Activated T-helper 2 cell treated with anti-CD3 and anti-CD28 coated beads, Interferon-gamma antibody, Interleukin-2, Interleukin-4, amounts not matched to agents 10 μg/mL and 5 μg/mL and 100 μg/mL, durations not matched to agents 14 hours and 24 hours and 36 hours (primary cell): ENCODE measurements at regions of chr10 and their contacts with region 1.

Region 1: DNA sequence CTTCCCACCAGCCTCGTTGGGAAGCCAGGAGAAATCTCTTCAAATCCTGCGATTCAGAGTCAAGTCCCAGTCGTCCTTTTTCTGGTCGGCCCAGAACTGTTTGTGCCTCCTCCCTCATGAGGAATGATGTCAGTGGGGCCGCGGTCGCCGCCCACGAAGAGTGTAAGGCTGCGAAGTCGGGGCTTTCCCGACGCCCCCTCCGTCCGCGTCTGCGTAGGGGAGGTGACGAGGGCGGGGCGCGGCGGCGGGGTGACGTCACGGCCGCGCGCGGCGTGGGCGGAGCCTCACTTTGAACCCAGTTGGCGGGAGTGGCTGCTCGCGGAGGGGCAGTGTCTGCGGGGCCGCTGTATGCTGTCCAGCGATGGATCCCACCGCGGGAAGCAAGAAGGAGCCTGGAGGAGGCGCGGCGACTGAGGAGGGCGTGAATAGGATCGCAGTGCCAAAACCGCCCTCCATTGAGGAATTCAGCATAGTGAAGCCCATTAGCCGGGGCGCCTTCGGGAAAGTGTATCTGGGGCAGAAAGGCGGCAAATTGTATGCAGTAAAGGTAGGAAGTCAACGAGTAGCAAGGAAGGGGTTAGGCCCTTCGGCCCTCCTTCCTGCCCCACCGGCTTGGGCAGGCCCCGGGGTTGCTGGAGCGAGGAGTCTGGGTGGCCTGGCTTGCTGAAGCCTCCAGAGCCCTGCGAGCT is at the start of gene MASTL:
- DNase-seq: peak; percentile 93
- H3K4me3 Mint-ChIP-seq: peak within 1 kb of the TSS; percentile 99
- H3K27ac Mint-ChIP-seq: peak within 1 kb of the TSS; percentile 100
- H3K4me1 Mint-ChIP-seq: peaks cover 31% of the 10 kb centered on the region
- H3K27me3 Mint-ChIP-seq: no peaks in the 10 kb centered on the region
- total RNA-seq, gene MASTL: 26.7 and 29.7 TPM in 2 replicates

Region 2: DNA sequence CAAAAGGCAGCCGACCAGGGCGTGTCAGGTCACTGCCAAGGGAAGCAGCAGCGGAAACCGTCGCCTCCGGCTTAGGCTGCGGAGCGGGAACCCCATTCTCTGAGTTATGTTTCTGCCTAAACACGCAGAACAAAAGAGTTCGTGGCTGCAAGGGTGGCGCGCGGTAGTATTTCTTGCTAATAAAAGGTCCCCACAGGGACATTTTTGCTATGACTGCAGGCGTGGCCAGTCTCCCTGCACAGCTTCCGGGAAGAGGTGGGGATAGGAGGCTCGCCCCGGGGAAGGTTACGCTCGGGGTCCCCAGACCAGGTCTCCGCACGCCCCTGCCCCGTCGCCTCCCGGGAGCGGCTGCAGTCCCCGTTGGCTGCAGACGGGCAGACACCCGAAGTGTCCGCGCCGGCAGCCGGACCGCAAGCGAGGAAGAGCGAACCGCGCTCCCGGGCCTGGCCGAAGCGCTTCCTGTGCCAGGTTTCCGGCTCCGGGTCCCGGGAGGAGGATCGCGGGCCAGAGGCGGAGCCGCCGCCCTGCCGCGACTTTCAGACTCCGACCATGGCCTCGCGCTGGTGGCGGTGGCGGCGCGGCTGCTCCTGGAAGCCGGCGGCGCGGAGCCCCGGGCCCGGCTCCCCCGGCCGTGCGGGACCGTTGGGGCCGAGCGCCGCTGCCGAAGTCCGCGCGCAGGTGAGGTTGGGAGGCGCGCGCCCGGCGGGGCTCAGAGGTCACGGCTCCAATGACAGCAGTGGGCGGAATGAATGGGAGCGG is 457.9 kb before region 1 on chr10 and contains the start of gene PDSS1:
- intact Hi-C with region 1: loop called (anchors 1 kb)
- DNase-seq: peak; percentile 64
- H3K4me3 Mint-ChIP-seq: peak within 1 kb of the TSS; percentile 99
- H3K27ac Mint-ChIP-seq: peak within 1 kb of the TSS; percentile 92
- H3K4me1 Mint-ChIP-seq: peaks cover 30% of the 10 kb centered on the region
- H3K27me3 Mint-ChIP-seq: no peaks in the 10 kb centered on the region
- total RNA-seq, gene PDSS1: 27.9 and 32.3 TPM in 2 replicates

Region 3: GRCh38 chr10:26931223-26931622 is 224.0 kb before region 1 on chr10:
- intact Hi-C with region 1: no loop called
- DNase-seq: no peak
- H3K4me3 Mint-ChIP-seq: no peak overlapping the region
- H3K27ac Mint-ChIP-seq: no peak overlapping the region
- H3K4me1 Mint-ChIP-seq: peaks cover 3% of the 10 kb centered on the region
- H3K27me3 Mint-ChIP-seq: peaks cover 15% of the 10 kb centered on the region

Region 4: GRCh38 chr10:26969145-26969926 is 185.9 kb before region 1 on chr10:
- intact Hi-C with region 1: loop called (anchors 1 kb)
- DNase-seq: no peak
- H3K4me3 Mint-ChIP-seq: no peak overlapping the region
- H3K27ac Mint-ChIP-seq: peak overlapping the region; percentile 56
- H3K4me1 Mint-ChIP-seq: peaks cover 29% of the 10 kb centered on the region
- H3K27me3 Mint-ChIP-seq: no peaks in the 10 kb centered on the region

Region 5: GRCh38 chr10:27285108-27285507 is 129.9 kb after region 1 on chr10:
- intact Hi-C with region 1: loop called (anchors 5 kb)
- DNase-seq: peak; percentile 12
- H3K4me3 Mint-ChIP-seq: no peak overlapping the region
- H3K27ac Mint-ChIP-seq: no peak overlapping the region
- H3K4me1 Mint-ChIP-seq: peaks cover 7% of the 10 kb centered on the region
- H3K27me3 Mint-ChIP-seq: peaks cover 16% of the 10 kb centered on the region

Region 6: GRCh38 chr10:27504007-27504807 is 349.0 kb after region 1 on chr10 and contains the start of gene RAB18:
- intact Hi-C with region 1: loop called (anchors 10 kb)
- DNase-seq: peak; percentile 98
- H3K4me3 Mint-ChIP-seq: peak within 1 kb of the TSS; percentile 93
- H3K27ac Mint-ChIP-seq: peak within 1 kb of the TSS; percentile 91
- H3K4me1 Mint-ChIP-seq: peaks cover 46% of the 10 kb centered on the region
- H3K27me3 Mint-ChIP-seq: no peaks in the 10 kb centered on the region
- total RNA-seq, gene RAB18: 55.9 and 56.4 TPM in 2 replicates